ENCODE measurements at regions of chr12 and their contacts with region 1.

Region 1: DNA sequence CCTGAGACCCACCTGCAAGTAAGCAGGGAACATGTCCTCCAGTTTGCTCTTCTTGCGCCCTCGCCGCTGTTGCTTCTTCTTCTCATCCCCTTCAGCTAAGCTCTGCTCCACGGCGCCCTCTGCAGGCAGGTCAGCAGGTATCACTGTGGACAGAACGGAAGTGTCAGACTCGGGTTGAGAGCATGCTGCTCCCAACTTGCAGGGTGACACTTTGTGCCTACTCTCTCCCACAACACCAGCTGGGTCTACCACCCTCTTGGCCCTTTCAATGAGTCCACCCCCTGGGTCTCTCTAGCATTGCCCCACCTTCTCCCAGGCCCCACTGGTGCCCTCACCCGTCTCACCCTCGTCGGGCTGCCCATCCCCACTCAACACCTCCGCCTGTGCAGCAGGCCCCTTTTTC is 16.7 kb downstream of the KMT2D start:
- DNase-seq: peak; percentile 91
- ATAC-seq: peak; percentile 86
- H3K4me3 Mint-ChIP-seq: no peak overlapping the region
- H3K27ac Mint-ChIP-seq: no peak overlapping the region
- H3K4me1 Mint-ChIP-seq: no peaks in the 10 kb centered on the region
- H3K27me3 Mint-ChIP-seq: no peaks in the 10 kb centered on the region
- CTCF ChIP-seq: peak; percentile 76

Region 2: GRCh38 chr12:49018261-49019119 is 25.4 kb before region 1 on chr12 and contains the start of gene PRKAG1:
- CTCF ChIA-PET with region 1: interaction called, 16 read pairs
- POLR2A ChIA-PET with region 1: no interaction called
- DNase-seq: peak; percentile 97
- ATAC-seq: peak; percentile 94
- H3K4me3 Mint-ChIP-seq: peak within 1 kb of the TSS; percentile 91
- H3K27ac Mint-ChIP-seq: peak within 1 kb of the TSS; percentile 99
- H3K4me1 Mint-ChIP-seq: peaks cover 16% of the 10 kb centered on the region
- H3K27me3 Mint-ChIP-seq: peaks cover 6% of the 10 kb centered on the region
- CTCF ChIP-seq: no peak
- total RNA-seq, gene PRKAG1: 37.9 to 41.6 TPM (median 38.0 TPM) in 3 replicates

Region 3: DNA sequence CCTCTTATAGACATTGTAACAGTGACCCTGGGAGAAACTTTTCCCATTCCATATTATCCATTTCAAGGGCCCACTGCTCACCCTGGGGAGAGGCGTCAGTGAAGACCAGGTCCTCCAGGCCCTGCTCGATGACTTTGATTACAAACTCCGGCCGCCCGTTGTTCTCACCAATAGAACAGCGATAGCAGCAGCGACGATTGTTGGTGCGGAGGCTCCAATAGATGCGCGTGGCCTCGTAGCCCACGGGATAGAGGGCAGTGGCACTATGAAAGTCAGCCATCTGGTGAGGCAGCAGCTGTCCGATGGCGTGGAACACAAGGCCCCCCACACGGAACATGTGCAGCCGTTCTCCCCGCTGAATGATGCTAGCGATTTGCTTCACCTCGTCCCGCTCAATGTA is 17.8 kb before region 1 on chr12:
- CTCF ChIA-PET with region 1: interaction called, 12 read pairs
- POLR2A ChIA-PET with region 1: interaction called, 3 read pairs
- DNase-seq: no peak
- ATAC-seq: no peak
- H3K4me3 Mint-ChIP-seq: no peak overlapping the region
- H3K27ac Mint-ChIP-seq: no peak overlapping the region
- H3K4me1 Mint-ChIP-seq: no peaks in the 10 kb centered on the region
- H3K27me3 Mint-ChIP-seq: no peaks in the 10 kb centered on the region
- CTCF ChIP-seq: no peak

Region 4: DNA sequence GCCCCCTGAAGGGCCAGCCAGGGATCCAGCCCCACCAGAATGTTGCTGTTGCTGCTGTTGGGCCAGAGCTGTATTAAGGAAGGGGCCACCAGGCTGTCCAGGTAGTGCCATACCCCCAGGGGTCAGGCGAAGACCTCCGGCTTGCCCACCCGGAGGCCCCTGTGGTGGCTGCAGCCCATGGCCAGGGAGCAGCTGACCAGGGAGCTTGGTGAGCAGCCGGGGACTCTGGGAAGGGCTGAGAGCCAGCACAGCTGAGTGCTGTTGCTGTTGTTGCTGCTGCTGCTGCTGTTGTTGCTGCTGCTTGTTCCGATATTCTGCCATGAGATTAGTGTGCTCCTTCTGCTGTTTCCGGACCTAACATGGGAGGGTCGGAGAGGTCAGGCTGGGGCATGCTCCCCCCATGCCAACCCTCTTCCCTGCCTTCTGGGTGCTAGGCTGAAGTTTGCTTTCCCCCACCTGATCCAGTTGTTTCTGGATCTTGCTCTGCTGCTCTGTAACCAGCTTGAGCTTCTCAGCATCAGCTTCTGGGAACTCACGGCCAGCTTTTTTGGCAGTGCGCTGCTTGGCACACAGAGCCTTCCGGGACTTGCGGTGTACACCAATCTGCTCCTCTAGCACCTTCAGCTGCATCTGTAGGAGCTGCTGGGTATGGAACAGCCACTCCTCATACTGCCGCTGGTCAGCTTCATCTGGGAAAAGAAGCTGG is 10.1 kb before region 1 on chr12:
- CTCF ChIA-PET with region 1: interaction called, 23 read pairs
- POLR2A ChIA-PET with region 1: interaction called, 3 read pairs
- DNase-seq: no peak
- ATAC-seq: no peak
- H3K4me3 Mint-ChIP-seq: no peak overlapping the region
- H3K27ac Mint-ChIP-seq: no peak overlapping the region
- H3K4me1 Mint-ChIP-seq: no peaks in the 10 kb centered on the region
- H3K27me3 Mint-ChIP-seq: no peaks in the 10 kb centered on the region
- CTCF ChIP-seq: no peak